ENCODE measurements at regions of chr2 and their contacts with region 1.

Region 1: GRCh38 chr2:9967053-9967775 is 15.7 kb downstream of the GRHL1 start:
- DNase-seq: no peak
- H3K4me3 ChIP-seq: no peak overlapping the region
- H3K27ac ChIP-seq: no peak overlapping the region
- H3K4me1 ChIP-seq: peaks cover 28% of the 10 kb centered on the region
- H3K27me3 ChIP-seq: no peaks in the 10 kb centered on the region
- CTCF ChIP-seq: no peak

Region 2: GRCh38 chr2:9905379-9905778 is 61.8 kb before region 1 on chr2:
- CTCF ChIA-PET with region 1: no interaction called
- POLR2A ChIA-PET with region 1: no interaction called
- intact Hi-C with region 1: loop called (anchors 2 kb)
- DNase-seq: peak; percentile 14 to 99
- H3K4me3 ChIP-seq: no peak overlapping the region; the same call in 1 of the 2 replicates
- H3K27ac ChIP-seq: peak overlapping the region; percentile 71
- H3K4me1 ChIP-seq: peaks cover 36% of the 10 kb centered on the region
- H3K27me3 ChIP-seq: no peaks in the 10 kb centered on the region
- CTCF ChIP-seq: no peak

Region 3: GRCh38 chr2:10057231-10058107 is 90.3 kb after region 1 on chr2:
- CTCF ChIA-PET with region 1: no interaction called
- POLR2A ChIA-PET with region 1: no interaction called
- intact Hi-C with region 1: no loop called
- DNase-seq: peak; percentile 63 to 76
- H3K4me3 ChIP-seq: peak overlapping the region; percentile 50; the same call in 1 of the 2 replicates
- H3K27ac ChIP-seq: no peak overlapping the region
- H3K4me1 ChIP-seq: peaks cover 10% of the 10 kb centered on the region; the same call in 1 of the 2 replicates
- H3K27me3 ChIP-seq: no peaks in the 10 kb centered on the region
- CTCF ChIP-seq: no peak

Region 4: DNA sequence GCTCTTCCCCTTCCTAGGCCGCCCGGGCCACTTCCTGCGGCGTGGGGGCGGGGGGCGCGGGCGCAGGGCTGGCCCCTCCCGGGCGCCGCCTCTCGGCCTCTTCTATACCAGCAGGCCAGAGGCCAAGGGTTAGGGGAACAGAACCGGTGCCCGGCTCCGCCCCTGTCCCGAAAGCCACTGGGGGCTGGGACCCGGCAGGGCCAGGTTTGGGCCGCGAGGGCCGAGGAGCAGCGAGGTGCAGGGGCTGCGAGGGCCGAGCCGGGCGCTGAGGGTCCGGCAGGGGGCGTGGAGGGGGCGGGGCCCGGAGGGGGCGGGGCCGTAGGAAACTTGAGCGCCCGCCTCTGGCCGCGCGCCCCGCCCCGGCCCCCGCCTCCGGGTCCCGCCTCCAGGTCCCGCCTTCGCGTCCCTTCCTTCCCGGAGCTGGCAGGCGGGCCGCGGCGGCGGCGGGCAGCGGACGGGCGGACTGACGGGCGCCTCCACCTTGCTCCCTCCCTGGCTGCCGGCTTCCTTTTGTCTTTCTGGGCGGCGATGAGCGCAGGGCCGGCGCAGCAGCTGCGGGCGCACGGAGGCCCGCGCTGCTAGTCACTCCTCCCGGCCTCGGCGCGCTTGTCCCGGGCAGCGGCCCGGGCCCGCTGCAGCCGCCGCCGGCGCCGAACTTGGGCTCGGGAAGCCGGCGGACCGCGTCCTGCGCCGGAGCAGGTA is 335.4 kb after region 1 on chr2 and contains the start of gene HPCAL1:
- CTCF ChIA-PET with region 1: no interaction called
- POLR2A ChIA-PET with region 1: no interaction called
- intact Hi-C with region 1: no loop called
- DNase-seq: peak; percentile 85 to 96
- H3K4me3 ChIP-seq: peak within 1 kb of the TSS; percentile 92
- H3K27ac ChIP-seq: peak within 1 kb of the TSS; percentile 83
- H3K4me1 ChIP-seq: peaks cover 71% of the 10 kb centered on the region
- H3K27me3 ChIP-seq: no peaks in the 10 kb centered on the region
- CTCF ChIP-seq: peak; percentile 63
- total RNA-seq, gene HPCAL1: 91.1 and 105 TPM in 2 replicates

Measured in PC-9 (cell line).